Activated B cell treated with CpG ODN at 0.5 μM for 24 hours (primary cell): ENCODE measurements at regions of chr6 and their contacts with region 1.

Region 1: DNA sequence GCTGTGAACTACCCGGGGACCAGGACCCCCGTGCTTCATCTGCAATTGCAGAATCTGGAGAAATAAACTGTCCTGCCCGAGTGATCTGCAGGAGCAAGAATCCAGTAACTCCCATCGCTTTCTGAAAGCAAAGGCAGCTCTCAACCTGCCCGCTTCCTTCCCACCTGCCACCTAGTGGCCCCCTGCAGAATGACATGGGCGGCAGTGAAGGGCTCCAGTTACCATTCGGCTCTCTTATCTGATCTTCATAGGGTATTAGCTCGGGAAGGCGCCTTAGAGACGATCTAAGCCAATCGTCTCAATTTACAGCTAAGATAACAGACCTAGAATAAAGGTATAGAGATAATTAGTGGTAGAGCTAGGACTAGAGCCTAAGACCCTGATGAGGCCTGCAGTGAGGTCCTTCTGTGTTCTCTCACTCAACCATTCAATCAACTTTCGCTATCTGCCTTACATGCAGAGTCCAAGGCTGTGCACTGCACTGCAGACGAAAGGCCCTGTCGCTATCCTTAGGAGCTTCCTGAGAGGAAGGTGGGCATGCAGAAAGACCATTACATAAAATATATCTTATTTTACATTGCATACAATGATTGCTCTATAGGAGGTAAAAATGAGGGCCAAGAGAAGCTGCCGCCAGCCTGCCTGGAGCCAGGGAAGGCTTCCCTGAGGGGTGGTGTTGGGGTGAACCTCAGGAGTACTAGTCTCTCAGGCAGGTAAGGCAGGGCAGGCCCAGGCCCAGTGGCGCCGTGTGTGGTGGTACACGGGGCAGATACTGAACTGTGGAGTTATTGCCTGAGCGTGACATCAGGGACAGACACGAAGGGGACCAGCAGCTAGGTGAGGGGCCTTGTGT is 7.1 kb upstream of the PSMG4 start:
- DNase-seq: peak; percentile 68
- ATAC-seq: peak; percentile 100
- H3K4me3 Mint-ChIP-seq: peak overlapping the region; percentile 64
- H3K27ac Mint-ChIP-seq: peak overlapping the region; percentile 21
- H3K4me1 Mint-ChIP-seq: peaks cover 6% of the 10 kb centered on the region
- H3K27me3 Mint-ChIP-seq: peaks cover 30% of the 10 kb centered on the region
- CTCF ChIP-seq: peak; percentile 91

Region 2: DNA sequence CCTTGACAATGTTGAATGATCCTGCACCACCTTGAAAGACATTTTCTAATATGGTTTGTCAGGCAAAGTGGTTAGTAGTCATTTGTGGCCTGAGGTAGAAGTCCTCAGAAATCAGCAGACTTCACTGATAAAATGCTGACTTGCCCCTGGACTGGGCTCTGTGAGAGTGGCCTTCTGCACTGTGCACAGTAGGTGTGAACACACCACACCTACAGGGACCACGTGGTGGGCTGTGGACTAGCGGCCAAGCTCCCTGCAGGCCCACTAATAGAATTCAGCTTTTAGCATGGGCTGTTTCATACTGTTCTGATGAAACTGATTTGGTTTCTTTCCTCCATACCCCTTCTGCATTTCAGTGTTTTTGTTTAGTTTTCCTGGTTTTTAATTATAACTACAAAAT is 125.9 kb before region 1 on chr6:
- CTCF ChIA-PET with region 1: interaction called, 22 read pairs
- POLR2A ChIA-PET with region 1: interaction called, 4 read pairs
- intact Hi-C with region 1: loop called (anchors 1 kb)
- DNase-seq: no peak
- ATAC-seq: no peak
- H3K4me3 Mint-ChIP-seq: no peak overlapping the region
- H3K27ac Mint-ChIP-seq: no peak overlapping the region
- H3K4me1 Mint-ChIP-seq: peaks cover 8% of the 10 kb centered on the region
- H3K27me3 Mint-ChIP-seq: no peaks in the 10 kb centered on the region
- CTCF ChIP-seq: no peak

Region 3: DNA sequence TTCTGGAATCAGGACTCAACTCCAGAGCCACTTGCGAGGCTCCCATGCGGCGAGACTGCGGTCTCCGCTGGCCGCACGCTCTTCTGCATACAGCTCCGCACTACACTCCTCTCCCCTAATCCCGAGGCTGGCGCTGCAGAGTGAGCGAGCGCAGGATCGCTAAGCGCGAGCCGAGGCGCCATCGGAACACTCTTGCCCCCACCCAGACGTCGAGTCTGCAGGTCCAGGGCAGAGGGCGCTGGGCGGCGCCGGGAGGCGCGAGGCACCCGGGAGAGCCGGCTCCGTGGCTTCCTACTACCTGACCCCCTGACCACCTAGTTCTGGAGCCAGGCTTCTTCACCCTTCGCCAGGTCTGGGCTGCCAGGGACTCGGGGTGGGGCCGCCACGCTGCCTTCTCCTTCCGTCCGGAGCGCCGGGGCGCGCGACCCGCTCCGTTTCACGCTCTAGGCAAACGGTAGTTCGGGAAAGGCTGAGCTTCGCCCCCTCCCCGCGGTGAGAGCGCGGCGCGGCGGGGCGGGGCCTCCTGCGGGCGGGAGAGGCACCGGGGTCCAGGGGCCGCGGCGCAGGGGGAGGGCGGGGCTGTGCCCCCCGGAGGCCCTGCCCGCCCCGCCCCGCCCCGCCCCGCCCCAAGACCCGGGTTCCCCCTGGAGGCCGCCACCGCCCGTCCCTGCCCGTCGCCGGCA is 89.0 kb before region 1 on chr6:
- CTCF ChIA-PET with region 1: interaction called, 5 read pairs
- POLR2A ChIA-PET with region 1: no interaction called
- intact Hi-C with region 1: loop called (anchors 1 kb)
- DNase-seq: peak; percentile 70
- ATAC-seq: peak; percentile 82
- H3K4me3 Mint-ChIP-seq: peak overlapping the region; percentile 87
- H3K27ac Mint-ChIP-seq: peak overlapping the region; percentile 69
- H3K4me1 Mint-ChIP-seq: peaks cover 28% of the 10 kb centered on the region
- H3K27me3 Mint-ChIP-seq: peaks cover 2% of the 10 kb centered on the region
- CTCF ChIP-seq: no peak

Region 4: DNA sequence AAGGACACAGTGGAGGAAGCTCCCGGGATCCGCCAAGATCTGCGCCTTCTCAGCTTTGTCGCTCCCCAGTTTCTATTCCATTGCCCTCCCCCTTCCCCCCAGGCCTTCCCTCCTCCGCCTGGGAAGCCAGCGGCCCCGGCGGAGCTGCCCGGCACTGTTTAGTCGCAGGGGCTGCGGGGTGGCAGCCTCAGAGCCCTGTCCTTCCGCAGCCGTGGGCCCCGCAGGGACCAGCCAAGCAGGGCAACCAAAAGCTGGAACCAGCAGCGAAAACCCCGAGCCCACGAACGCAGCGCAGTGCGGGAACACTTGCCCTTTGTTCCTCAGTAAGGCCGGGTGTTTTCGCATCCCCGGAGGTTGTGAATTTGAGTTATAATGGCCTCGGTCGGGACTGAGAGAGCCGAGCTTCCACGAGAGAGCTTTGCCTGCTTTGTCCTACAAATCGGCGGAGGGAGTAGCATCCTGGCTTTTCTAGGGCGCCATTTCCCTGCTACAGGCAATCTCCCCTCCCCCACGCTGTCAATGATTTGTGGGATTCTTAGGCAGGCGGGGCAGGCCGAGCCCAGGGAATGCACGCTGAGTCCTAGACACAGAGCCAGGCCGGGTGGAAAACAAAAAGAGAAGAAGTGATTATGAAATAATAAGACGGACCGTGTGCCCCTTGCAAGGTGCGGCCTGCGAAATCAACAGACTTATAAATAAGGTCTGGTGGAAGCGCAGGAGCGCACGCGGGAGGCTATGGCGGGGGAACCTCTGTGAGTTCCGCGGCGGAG is 20.3 kb before region 1 on chr6:
- CTCF ChIA-PET with region 1: interaction called, 4 read pairs
- POLR2A ChIA-PET with region 1: no interaction called
- intact Hi-C with region 1: loop called (anchors 1 kb)
- DNase-seq: no peak
- ATAC-seq: no peak
- H3K4me3 Mint-ChIP-seq: peak overlapping the region; percentile 21
- H3K27ac Mint-ChIP-seq: no peak overlapping the region
- H3K4me1 Mint-ChIP-seq: peaks cover 47% of the 10 kb centered on the region
- H3K27me3 Mint-ChIP-seq: peaks cover 65% of the 10 kb centered on the region
- CTCF ChIP-seq: no peak

Region 5: GRCh38 chr6:3239110-3239830 is 12.4 kb before region 1 on chr6:
- CTCF ChIA-PET with region 1: interaction called, 12 read pairs
- POLR2A ChIA-PET with region 1: no interaction called
- intact Hi-C with region 1: no loop called
- DNase-seq: no peak
- ATAC-seq: no peak
- H3K4me3 Mint-ChIP-seq: no peak overlapping the region
- H3K27ac Mint-ChIP-seq: no peak overlapping the region
- H3K4me1 Mint-ChIP-seq: peaks cover 4% of the 10 kb centered on the region
- H3K27me3 Mint-ChIP-seq: peaks cover 39% of the 10 kb centered on the region
- CTCF ChIP-seq: no peak

Region 6: GRCh38 chr6:3687847-3688246 is 436.2 kb after region 1 on chr6:
- CTCF ChIA-PET with region 1: no interaction called
- POLR2A ChIA-PET with region 1: no interaction called
- intact Hi-C with region 1: no loop called
- DNase-seq: no peak
- ATAC-seq: no peak
- H3K4me3 Mint-ChIP-seq: no peak overlapping the region
- H3K27ac Mint-ChIP-seq: no peak overlapping the region
- H3K4me1 Mint-ChIP-seq: no peaks in the 10 kb centered on the region
- H3K27me3 Mint-ChIP-seq: no peaks in the 10 kb centered on the region
- CTCF ChIP-seq: no peak